ENCODE measurements at regions of chr18 and their contacts with region 1.

Region 1: GRCh38 chr18:45156946-45157345 is 458.3 kb upstream of the SLC14A2 start:
- DNase-seq: no peak
- ATAC-seq: no peak
- H3K4me3 ChIP-seq: no peak overlapping the region
- H3K27ac ChIP-seq: no peak overlapping the region
- H3K4me1 ChIP-seq: peaks cover 0 to 7% (median 0%) of the 10 kb centered on the region in 12 donors
- H3K27me3 ChIP-seq: no peaks in the 10 kb centered on the region
- CTCF ChIP-seq: no peak
- POLR2A ChIP-seq: no peak

Region 2: GRCh38 chr18:44358402-44358801 is 798.5 kb before region 1 on chr18:
- intact Hi-C with region 1: loop called in 1 of 10 experiments (anchors 10 kb)
- DNase-seq: no peak
- ATAC-seq: no peak
- H3K4me3 ChIP-seq: no peak overlapping the region
- H3K27ac ChIP-seq: no peak overlapping the region
- H3K4me1 ChIP-seq: no peaks in the 10 kb centered on the region
- H3K27me3 ChIP-seq: no peaks in the 10 kb centered on the region
- CTCF ChIP-seq: no peak
- POLR2A ChIP-seq: no peak

Measured in heart left ventricle (tissue), 16 donors.